MCF 10A (cell line): ENCODE measurements at regions of chr11 and their contacts with region 1.

Region 1: GRCh38 chr11:15101072-15101709 is 13.5 kb upstream of the INSC start:
- DNase-seq: peak; percentile 80
- H3K4me3 Mint-ChIP-seq: no peak overlapping the region
- H3K27ac Mint-ChIP-seq: no peak overlapping the region
- H3K4me1 Mint-ChIP-seq: peaks cover 21% of the 10 kb centered on the region
- H3K27me3 Mint-ChIP-seq: no peaks in the 10 kb centered on the region
- CTCF ChIP-seq: peak; percentile 93

Region 2: GRCh38 chr11:15123849-15124248 is 22.7 kb after region 1 on chr11:
- CTCF ChIA-PET with region 1: interaction called, 22 read pairs
- POLR2A ChIA-PET with region 1: no interaction called
- intact Hi-C with region 1: no loop called
- DNase-seq: peak; percentile 68
- H3K4me3 Mint-ChIP-seq: no peak overlapping the region
- H3K27ac Mint-ChIP-seq: peak overlapping the region; percentile 32
- H3K4me1 Mint-ChIP-seq: peaks cover 50% of the 10 kb centered on the region
- H3K27me3 Mint-ChIP-seq: no peaks in the 10 kb centered on the region
- CTCF ChIP-seq: no peak

Region 3: GRCh38 chr11:15159085-15159484 is 57.9 kb after region 1 on chr11:
- CTCF ChIA-PET with region 1: interaction called, 48 read pairs
- POLR2A ChIA-PET with region 1: interaction called, 3 read pairs
- intact Hi-C with region 1: loop called (anchors 1 kb)
- DNase-seq: peak; percentile 62
- H3K4me3 Mint-ChIP-seq: no peak overlapping the region
- H3K27ac Mint-ChIP-seq: no peak overlapping the region
- H3K4me1 Mint-ChIP-seq: peaks cover 22% of the 10 kb centered on the region
- H3K27me3 Mint-ChIP-seq: no peaks in the 10 kb centered on the region
- CTCF ChIP-seq: peak; percentile 79

Region 4: DNA sequence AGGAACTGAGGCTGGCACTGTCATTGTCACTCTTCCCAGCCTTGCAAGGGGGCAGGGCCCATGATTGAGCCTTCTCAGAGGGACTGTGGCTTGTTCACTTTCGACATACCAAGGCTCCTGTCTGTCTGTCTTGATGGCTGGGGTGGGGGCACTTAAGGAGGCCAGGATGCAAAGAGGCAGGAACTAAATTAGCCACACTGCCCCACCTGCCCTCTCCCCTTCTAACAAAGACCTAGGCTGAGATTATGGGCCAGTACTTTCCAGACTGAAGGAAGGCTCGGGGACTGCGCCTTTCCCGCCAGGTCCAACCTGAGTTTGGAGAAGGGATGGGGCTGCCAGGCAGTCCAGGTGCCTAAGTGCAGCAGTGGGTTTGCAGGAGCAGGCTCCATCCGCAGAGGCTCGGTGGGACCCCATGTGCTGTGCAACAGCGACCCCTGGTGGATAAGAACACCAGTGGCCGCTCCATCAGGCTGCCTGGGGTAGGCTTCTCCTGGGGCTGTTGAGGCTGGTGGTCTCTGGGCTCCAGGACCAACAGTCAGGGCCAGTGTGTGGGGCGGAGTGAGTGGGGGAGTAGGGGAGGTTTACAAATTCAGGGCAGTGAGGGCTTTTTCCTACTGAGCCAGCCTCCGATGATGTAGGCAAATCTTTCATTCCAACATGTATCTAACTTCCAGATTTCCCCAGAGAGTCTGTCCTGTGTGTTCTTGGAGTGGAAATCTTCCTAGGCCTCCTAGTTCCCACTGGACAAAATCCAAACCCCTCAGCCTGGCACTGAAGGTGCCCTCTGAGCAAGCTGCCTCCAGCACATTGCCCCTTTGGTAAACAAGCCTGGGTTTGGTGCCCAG is 107.4 kb after region 1 on chr11:
- CTCF ChIA-PET with region 1: interaction called, 276 read pairs
- POLR2A ChIA-PET with region 1: interaction called, 3 read pairs
- intact Hi-C with region 1: loop called (anchors 1 kb)
- DNase-seq: peak; percentile 71
- H3K4me3 Mint-ChIP-seq: no peak overlapping the region
- H3K27ac Mint-ChIP-seq: no peak overlapping the region
- H3K4me1 Mint-ChIP-seq: no peaks in the 10 kb centered on the region
- H3K27me3 Mint-ChIP-seq: no peaks in the 10 kb centered on the region
- CTCF ChIP-seq: peak; percentile 95